ENCODE measurements at regions of chr20 and their contacts with region 1.

Region 1: DNA sequence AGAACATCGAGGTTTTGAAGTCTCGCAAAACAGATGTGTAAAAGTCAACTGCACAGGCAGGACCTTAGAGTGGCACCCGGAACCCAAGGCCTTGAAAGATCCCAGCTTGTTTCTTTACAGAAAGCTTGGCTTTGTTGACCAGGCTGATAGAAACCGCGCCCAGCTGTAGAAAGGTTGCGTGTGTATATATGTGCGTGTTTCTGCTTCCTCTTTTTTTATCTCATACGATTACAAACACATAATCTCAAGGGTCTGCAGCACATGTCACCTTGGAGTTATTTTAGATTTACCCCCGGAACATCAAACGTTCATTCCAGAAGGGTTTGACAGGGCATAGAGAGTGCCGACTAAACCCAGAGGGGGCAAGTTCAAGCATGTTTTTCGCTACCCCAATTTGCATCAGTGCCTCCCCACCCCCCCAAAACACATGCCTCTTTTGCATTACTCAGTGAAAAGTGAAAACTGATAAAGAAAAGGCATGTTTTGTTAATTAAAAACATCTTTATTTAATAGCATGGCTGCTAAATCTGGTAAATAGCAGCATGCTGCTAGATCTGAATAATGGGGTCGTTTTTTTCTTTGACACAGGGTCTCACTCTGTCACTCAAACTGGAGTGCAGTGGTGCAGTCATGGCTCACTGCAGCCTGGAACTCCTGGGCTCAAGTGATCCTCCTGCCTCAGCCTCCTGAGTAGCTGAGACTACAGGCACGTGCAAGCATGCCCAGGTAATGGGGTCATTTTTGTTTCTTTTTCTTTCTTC is 33.2 kb upstream of the NCOA3 start:
- DNase-seq: peak; percentile 84
- ATAC-seq: peak; percentile 81
- H3K4me3 ChIP-seq: peak overlapping the region in 2 of 5 experiments; percentile 8 to 38
- H3K4me3 Mint-ChIP-seq: peak overlapping the region; percentile 68
- H3K27ac ChIP-seq: peak overlapping the region; percentile 66 to 79
- H3K27ac Mint-ChIP-seq: peak overlapping the region; percentile 95
- H3K4me1 ChIP-seq: peaks cover 42 to 55% of the 10 kb centered on the region in 2 donors
- H3K4me1 Mint-ChIP-seq: peaks cover 48% of the 10 kb centered on the region
- H3K27me3 ChIP-seq: no peaks in the 10 kb centered on the region
- H3K27me3 Mint-ChIP-seq: no peaks in the 10 kb centered on the region
- CTCF ChIP-seq: no peak

Region 2: GRCh38 chr20:47418061-47418912 is 50.2 kb before region 1 on chr20:
- CTCF ChIA-PET with region 1: interaction called, 10 read pairs
- POLR2A ChIA-PET with region 1: interaction called, 33 read pairs
- intact Hi-C with region 1: loop called (anchors 1 kb)
- DNase-seq: no peak
- ATAC-seq: no peak
- H3K4me3 ChIP-seq: no peak overlapping the region
- H3K4me3 Mint-ChIP-seq: no peak overlapping the region
- H3K27ac ChIP-seq: peak overlapping the region; percentile 97 to 99
- H3K27ac Mint-ChIP-seq: peak overlapping the region; percentile 99
- H3K4me1 ChIP-seq: peaks cover 59 to 73% of the 10 kb centered on the region in 2 donors
- H3K4me1 Mint-ChIP-seq: peaks cover 67% of the 10 kb centered on the region
- H3K27me3 ChIP-seq: no peaks in the 10 kb centered on the region
- H3K27me3 Mint-ChIP-seq: no peaks in the 10 kb centered on the region
- CTCF ChIP-seq: no peak

Region 3: GRCh38 chr20:47453142-47453782 is 15.2 kb before region 1 on chr20:
- CTCF ChIA-PET with region 1: interaction called, 3 read pairs
- POLR2A ChIA-PET with region 1: interaction called, 7 read pairs
- intact Hi-C with region 1: loop called (anchors 2 kb)
- DNase-seq: peak; percentile 43
- ATAC-seq: peak; percentile 72
- H3K4me3 ChIP-seq: no peak overlapping the region
- H3K4me3 Mint-ChIP-seq: peak overlapping the region; percentile 78
- H3K27ac ChIP-seq: peak overlapping the region in 1 of 2 donors; percentile 9
- H3K27ac Mint-ChIP-seq: peak overlapping the region; percentile 86
- H3K4me1 ChIP-seq: peaks cover 42 to 45% of the 10 kb centered on the region in 2 donors
- H3K4me1 Mint-ChIP-seq: peaks cover 50% of the 10 kb centered on the region
- H3K27me3 ChIP-seq: no peaks in the 10 kb centered on the region
- H3K27me3 Mint-ChIP-seq: no peaks in the 10 kb centered on the region
- CTCF ChIP-seq: no peak

Region 4: GRCh38 chr20:47663333-47664067 is 195.0 kb after region 1 on chr20:
- CTCF ChIA-PET with region 1: no interaction called
- POLR2A ChIA-PET with region 1: no interaction called
- intact Hi-C with region 1: no loop called
- DNase-seq: peak; percentile 82
- ATAC-seq: peak; percentile 84
- H3K4me3 ChIP-seq: no peak overlapping the region
- H3K4me3 Mint-ChIP-seq: no peak overlapping the region
- H3K27ac ChIP-seq: no peak overlapping the region
- H3K27ac Mint-ChIP-seq: peak overlapping the region; percentile 78
- H3K4me1 ChIP-seq: peaks cover 0 to 7% of the 10 kb centered on the region in 2 donors
- H3K4me1 Mint-ChIP-seq: peaks cover 7% of the 10 kb centered on the region
- H3K27me3 ChIP-seq: no peaks in the 10 kb centered on the region
- H3K27me3 Mint-ChIP-seq: no peaks in the 10 kb centered on the region
- CTCF ChIP-seq: peak; percentile 96

Region 5: GRCh38 chr20:47758517-47759348 is 290.3 kb after region 1 on chr20:
- CTCF ChIA-PET with region 1: no interaction called
- POLR2A ChIA-PET with region 1: no interaction called
- intact Hi-C with region 1: no loop called
- DNase-seq: no peak
- ATAC-seq: no peak
- H3K4me3 ChIP-seq: no peak overlapping the region
- H3K4me3 Mint-ChIP-seq: no peak overlapping the region
- H3K27ac ChIP-seq: no peak overlapping the region
- H3K27ac Mint-ChIP-seq: no peak overlapping the region
- H3K4me1 ChIP-seq: no peaks in the 10 kb centered on the region
- H3K4me1 Mint-ChIP-seq: no peaks in the 10 kb centered on the region
- H3K27me3 ChIP-seq: peaks cover 0 to 16% (median 3%) of the 10 kb centered on the region in 4 experiments
- H3K27me3 Mint-ChIP-seq: peaks cover 50% of the 10 kb centered on the region
- CTCF ChIP-seq: no peak

Measured in B cell (primary cell).